PC-3 (cell line): ENCODE measurements at regions of chr18 and their contacts with region 1.

Region 1: DNA sequence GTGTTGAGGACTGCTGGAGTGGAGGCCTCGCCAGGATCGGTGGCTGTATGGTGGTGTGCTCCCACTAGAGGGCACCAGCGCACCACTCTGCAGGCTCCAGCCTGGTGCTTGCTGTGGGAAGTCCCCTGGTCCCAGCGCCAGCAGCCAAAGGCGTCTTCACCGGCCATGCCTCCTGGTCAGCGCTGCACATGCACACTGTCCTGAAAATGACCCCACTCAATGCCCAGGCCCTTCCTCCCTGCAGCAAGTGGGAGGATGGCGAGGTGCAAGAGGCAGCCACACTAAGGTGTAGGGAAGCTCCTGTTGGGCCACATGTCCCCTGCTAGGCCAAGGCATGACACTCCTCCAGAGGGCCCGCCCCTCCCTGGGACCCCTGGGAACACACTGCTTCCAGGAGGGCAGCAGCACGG is 136.5 kb downstream of the CTIF start:
- DNase-seq: peak; percentile 67
- ATAC-seq: peak; percentile 97
- H3K4me3 ChIP-seq: no peak overlapping the region
- H3K27ac ChIP-seq: no peak overlapping the region
- H3K4me1 ChIP-seq: no peaks in the 10 kb centered on the region
- H3K27me3 ChIP-seq: no peaks in the 10 kb centered on the region
- CTCF ChIP-seq: peak; percentile 66

Region 2: DNA sequence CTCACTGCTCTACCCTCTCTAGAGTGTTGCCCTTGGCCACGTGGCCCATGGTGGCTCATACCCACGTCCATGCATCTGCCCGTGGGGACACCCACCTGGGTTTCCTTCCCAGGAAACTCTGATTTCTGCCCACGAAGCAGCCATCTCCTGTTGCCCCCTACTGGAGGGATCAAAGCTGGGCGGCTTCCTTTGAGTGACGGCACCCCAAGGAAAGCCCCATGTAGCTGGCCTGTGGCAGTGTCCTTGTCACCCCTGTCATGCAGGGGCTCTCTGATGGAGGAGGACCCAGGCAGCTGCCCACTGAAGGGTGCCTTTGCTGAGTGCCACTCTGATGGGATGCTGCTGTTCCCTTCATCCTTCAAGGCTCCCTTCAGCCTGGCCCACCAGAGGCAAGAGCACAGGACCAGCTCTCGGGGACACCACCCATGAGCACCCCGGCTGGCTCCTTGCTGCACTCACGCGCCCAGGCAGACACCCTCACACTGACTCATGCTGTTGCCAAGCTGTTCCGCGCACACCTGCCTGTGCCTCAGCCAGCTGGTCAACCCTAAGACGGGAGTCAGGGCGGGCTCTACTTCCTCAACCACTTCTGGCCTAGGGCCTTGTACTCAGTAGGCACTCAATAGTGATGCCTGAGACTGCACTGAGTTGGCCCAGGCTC is 35.5 kb before region 1 on chr18:
- CTCF ChIA-PET with region 1: no interaction called
- POLR2A ChIA-PET with region 1: no interaction called
- intact Hi-C with region 1: no loop called
- DNase-seq: no peak
- ATAC-seq: no peak
- H3K4me3 ChIP-seq: no peak overlapping the region
- H3K27ac ChIP-seq: no peak overlapping the region
- H3K4me1 ChIP-seq: no peaks in the 10 kb centered on the region
- H3K27me3 ChIP-seq: no peaks in the 10 kb centered on the region
- CTCF ChIP-seq: peak; percentile 26; the same call in 1 of the 2 replicates

Region 3: DNA sequence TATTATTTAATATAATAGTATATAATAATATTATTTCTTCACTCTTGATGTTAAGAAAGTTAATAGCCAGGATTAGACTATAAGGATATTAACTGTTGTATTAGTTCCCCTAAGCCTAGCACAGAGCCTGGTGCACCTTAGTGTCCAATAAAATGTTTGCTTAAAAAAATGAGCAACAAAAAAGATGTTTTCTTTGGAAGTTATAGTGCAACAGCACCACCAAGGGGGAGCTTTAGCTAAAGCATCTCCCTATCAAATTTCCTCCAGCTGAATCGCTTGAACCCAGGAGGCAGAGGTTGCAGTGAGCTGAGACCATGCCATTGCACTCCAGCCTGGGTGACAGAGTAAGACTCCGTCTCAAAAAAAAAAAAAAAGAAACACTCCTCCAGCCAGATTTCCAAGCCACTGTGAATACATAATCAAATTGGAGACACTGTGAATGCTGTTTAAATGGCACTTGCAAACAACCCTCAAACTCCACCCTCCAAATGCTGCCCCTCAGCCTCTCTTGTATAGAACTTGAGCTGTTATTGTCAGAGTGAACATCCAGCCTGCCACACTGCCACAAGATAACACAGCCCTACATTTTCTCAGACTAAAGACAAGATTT is 563.2 kb after region 1 on chr18:
- CTCF ChIA-PET with region 1: interaction called, 4 read pairs
- POLR2A ChIA-PET with region 1: no interaction called
- intact Hi-C with region 1: loop called (anchors 10 kb)
- DNase-seq: peak; percentile 35
- ATAC-seq: no peak
- H3K4me3 ChIP-seq: no peak overlapping the region
- H3K27ac ChIP-seq: no peak overlapping the region
- H3K4me1 ChIP-seq: no peaks in the 10 kb centered on the region
- H3K27me3 ChIP-seq: no peaks in the 10 kb centered on the region
- CTCF ChIP-seq: peak; percentile 51